ENCODE measurements at regions of chr11 and their contacts with region 1.

Region 1: DNA sequence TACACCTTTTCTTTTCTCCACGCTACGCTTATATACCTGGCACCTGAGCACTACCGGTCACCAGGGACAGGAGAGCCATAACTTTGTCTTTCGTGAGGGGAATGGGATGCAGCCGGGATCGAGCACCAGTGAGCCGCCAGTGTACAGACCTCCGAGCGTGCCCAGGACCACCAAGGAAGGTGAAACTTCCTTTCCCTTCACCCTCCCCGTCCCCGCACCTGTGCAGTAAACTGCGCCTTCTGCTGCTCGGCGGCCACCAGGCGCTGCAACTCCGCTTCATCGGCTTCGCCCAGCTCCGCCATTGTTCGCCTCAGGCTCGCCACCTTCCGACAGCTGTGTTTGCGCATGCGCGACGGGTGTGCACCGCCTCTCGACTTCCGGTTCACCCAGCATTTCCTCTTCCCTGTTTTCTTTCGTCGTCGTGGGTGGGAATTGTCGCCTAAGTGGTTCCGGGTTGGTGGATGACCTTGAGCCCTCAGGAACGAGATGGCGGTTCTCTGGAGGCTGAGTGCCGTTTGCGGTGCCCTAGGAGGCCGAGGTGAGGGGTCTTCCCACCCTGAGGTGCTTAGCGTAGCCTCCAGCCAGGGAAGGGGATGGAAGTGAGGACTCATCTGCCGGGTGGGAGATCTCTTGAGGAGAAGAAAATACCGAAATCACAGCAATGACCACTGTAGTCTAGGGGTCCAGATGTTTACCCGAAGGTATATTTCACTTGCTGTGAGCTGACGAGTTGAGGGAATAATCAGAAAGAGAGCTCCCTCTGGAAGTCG is at the starts of genes SDHD and TIMM8B:
- DNase-seq: peak; percentile 97
- H3K4me3 Mint-ChIP-seq: peak within 1 kb of the TSS; percentile 92
- H3K27ac Mint-ChIP-seq: peak within 1 kb of the TSS; percentile 92
- H3K4me1 Mint-ChIP-seq: peaks cover 63% of the 10 kb centered on the region
- H3K27me3 Mint-ChIP-seq: peaks cover 2% of the 10 kb centered on the region
- total RNA-seq, gene SDHD: 72.7 to 91.6 TPM
- total RNA-seq, gene TIMM8B: 36.5 to 38.4 TPM

Region 2: GRCh38 chr11:111766093-111766833 is 320.3 kb before region 1 on chr11 and contains the start of gene PPP2R1B:
- CTCF ChIA-PET with region 1: no interaction called
- POLR2A ChIA-PET with region 1: no interaction called
- intact Hi-C with region 1: loop called (anchors 10 kb)
- DNase-seq: peak; percentile 81
- H3K4me3 Mint-ChIP-seq: peak within 1 kb of the TSS; percentile 100
- H3K27ac Mint-ChIP-seq: peak within 1 kb of the TSS; percentile 89
- H3K4me1 Mint-ChIP-seq: peaks cover 34% of the 10 kb centered on the region
- H3K27me3 Mint-ChIP-seq: no peaks in the 10 kb centered on the region
- total RNA-seq, gene PPP2R1B: 49.4 to 51.1 TPM

Region 3: DNA sequence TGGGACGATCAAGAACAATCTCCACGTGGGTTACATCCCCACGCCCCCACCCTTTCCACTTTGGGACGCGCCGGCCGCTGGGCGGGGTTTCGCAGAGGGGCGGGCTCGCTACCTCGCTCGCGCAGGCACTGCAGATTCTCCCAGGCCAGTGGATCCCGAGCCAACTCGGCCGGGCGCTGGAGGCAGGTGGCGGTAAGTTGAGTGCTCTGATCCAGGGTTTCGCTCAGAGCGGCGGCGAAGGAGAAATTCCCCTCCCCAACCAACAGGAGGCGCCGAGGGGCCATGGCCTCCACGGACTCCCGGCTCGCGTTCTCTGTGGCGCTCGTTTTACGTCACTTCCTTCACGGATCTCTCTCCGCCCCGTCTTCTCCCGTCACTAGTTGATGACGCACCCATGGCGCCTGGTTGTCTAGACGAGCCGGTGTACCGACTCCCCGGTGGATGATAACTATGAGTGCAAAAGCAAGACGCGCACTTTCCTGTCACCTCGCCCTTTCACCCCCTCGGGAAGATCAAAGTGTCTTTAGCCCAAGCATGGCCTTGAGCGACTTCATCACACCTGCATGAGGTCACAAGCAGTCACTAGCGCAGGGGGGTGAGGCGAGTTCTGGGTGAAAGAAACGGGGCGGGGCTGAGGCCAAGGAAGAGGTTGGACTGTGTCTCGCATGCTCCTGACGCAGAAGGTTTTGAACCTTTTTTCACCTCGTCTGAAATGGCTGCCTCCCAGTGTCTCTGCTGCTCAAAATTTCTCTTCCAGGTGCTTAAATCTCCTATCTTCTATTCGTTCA is 207.6 kb before region 1 on chr11 and contains the starts of genes CFAP68 and FDXACB1:
- CTCF ChIA-PET with region 1: interaction called, 4 read pairs
- POLR2A ChIA-PET with region 1: no interaction called
- intact Hi-C with region 1: loop called (anchors 1 kb)
- DNase-seq: peak; percentile 96
- H3K4me3 Mint-ChIP-seq: peak within 1 kb of the TSS; percentile 82
- H3K27ac Mint-ChIP-seq: peak within 1 kb of the TSS; percentile 95
- H3K4me1 Mint-ChIP-seq: peaks cover 21% of the 10 kb centered on the region
- H3K27me3 Mint-ChIP-seq: no peaks in the 10 kb centered on the region
- total RNA-seq, gene CFAP68: 29.9 to 33.6 TPM
- total RNA-seq, gene FDXACB1: 5.2 to 5.6 TPM

Region 4: GRCh38 chr11:111932611-111932950 is 154.0 kb before region 1 on chr11:
- CTCF ChIA-PET with region 1: interaction called, 4 read pairs
- POLR2A ChIA-PET with region 1: interaction called, 4 read pairs
- intact Hi-C with region 1: loop called (anchors 1 kb)
- DNase-seq: no peak
- H3K4me3 Mint-ChIP-seq: peak overlapping the region; percentile 53
- H3K27ac Mint-ChIP-seq: peak overlapping the region; percentile 87
- H3K4me1 Mint-ChIP-seq: peaks cover 32% of the 10 kb centered on the region
- H3K27me3 Mint-ChIP-seq: no peaks in the 10 kb centered on the region

Region 5: DNA sequence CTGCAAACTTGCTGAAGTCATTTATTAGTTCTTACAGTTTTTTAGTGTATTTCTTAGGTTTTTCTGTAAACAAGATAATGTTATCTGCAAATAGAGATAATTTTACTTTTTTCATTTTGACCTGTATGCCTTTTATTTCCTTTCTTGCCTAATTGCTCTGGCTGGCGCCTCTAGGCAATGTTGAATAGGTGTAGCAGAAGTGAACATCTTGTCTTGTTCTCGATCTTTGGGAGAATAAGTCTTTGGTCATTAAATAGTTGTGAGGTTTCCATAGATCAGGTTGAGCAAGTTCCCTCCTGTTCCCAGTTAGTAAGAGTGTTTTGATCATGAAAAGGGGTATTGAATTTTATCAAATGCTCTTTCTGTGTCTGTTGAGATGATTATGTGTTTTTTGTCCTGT is 36.9 kb before region 1 on chr11:
- CTCF ChIA-PET with region 1: no interaction called
- POLR2A ChIA-PET with region 1: no interaction called
- intact Hi-C with region 1: loop called (anchors 2 kb)
- DNase-seq: no peak
- H3K4me3 Mint-ChIP-seq: no peak overlapping the region
- H3K27ac Mint-ChIP-seq: no peak overlapping the region
- H3K4me1 Mint-ChIP-seq: peaks cover 18% of the 10 kb centered on the region
- H3K27me3 Mint-ChIP-seq: no peaks in the 10 kb centered on the region

Region 6: GRCh38 chr11:112074026-112074811 is 12.4 kb before region 1 on chr11 and contains the start of gene NKAPD1:
- CTCF ChIA-PET with region 1: interaction called, 3 read pairs
- POLR2A ChIA-PET with region 1: interaction called, 6 read pairs
- intact Hi-C with region 1: loop called (anchors 1 kb)
- DNase-seq: peak; percentile 87
- H3K4me3 Mint-ChIP-seq: peak within 1 kb of the TSS; percentile 93
- H3K27ac Mint-ChIP-seq: peak within 1 kb of the TSS; percentile 94
- H3K4me1 Mint-ChIP-seq: peaks cover 29% of the 10 kb centered on the region
- H3K27me3 Mint-ChIP-seq: peaks cover 1% of the 10 kb centered on the region
- total RNA-seq, gene NKAPD1: 17.5 to 19.4 TPM

Region 7: GRCh38 chr11:112280268-112281126 is 193.9 kb after region 1 on chr11:
- CTCF ChIA-PET with region 1: interaction called, 3 read pairs
- POLR2A ChIA-PET with region 1: no interaction called
- intact Hi-C with region 1: loop called (anchors 10 kb)
- DNase-seq: peak; percentile 73
- H3K4me3 Mint-ChIP-seq: peak overlapping the region; percentile 84
- H3K27ac Mint-ChIP-seq: peak overlapping the region; percentile 65
- H3K4me1 Mint-ChIP-seq: peaks cover 15% of the 10 kb centered on the region
- H3K27me3 Mint-ChIP-seq: no peaks in the 10 kb centered on the region

Measured in activated CD4-positive, alpha-beta memory T cell treated with anti-CD3 and anti-CD28 coated beads for 36 hours (primary cell).